ENCODE measurements at regions of chr12 and their contacts with region 1.

Region 1: DNA sequence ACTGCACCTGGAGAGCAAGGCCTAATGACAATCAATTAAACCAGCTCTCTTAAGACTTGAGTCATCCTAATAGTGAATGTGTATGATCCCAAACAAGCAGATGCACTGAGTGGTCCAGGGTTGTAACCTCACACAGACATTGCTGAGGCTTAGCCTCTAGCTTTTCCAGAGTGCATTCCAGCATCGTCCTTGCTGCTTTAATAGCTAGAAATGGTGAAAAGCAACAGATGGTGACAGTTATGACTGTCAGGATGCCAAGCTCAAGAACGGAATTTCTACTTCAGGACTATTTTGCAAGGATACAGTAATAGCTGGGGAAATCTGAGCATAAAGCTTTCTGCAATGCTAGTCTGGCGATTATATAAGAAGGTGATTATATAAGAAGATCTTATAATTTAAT is 34.6 kb downstream of the PTPRR start:
- DNase-seq: no peak
- H3K4me3 ChIP-seq: no peak overlapping the region
- H3K27ac ChIP-seq: no peak overlapping the region
- H3K4me1 ChIP-seq: no peaks in the 10 kb centered on the region
- H3K27me3 ChIP-seq: no peaks in the 10 kb centered on the region
- CTCF ChIP-seq: no peak

Region 2: DNA sequence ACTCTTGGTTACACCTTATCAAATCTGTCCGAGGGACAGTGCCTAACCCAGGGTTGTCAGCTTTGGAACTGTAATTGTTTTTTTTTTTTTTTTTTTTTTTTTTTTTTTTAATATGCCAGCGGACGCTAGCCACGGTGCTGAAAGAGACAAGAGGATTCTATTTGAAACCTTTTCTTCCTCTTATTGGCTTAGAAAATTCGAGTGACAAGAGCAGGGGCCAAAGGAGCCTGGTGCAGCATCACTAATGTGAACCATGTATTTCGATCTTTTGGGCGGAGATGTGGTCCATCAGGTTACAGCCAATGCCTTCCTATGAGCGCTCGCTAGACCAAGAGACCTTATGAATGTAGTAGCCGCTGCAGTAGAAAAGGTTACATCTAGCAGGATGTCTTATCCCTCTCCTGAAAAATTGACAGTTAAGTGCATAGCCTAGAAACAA is 33.7 kb after region 1 on chr12:
- CTCF ChIA-PET with region 1: interaction called, 12 read pairs
- POLR2A ChIA-PET with region 1: no interaction called
- intact Hi-C with region 1: no loop called
- DNase-seq: no peak
- H3K4me3 ChIP-seq: no peak overlapping the region
- H3K27ac ChIP-seq: no peak overlapping the region
- H3K4me1 ChIP-seq: no peaks in the 10 kb centered on the region
- H3K27me3 ChIP-seq: peaks cover 24% of the 10 kb centered on the region
- CTCF ChIP-seq: no peak